Posterior vena cava (tissue), 2 donors: ENCODE measurements at regions of chr1 and their contacts with region 1.

Region 1: DNA sequence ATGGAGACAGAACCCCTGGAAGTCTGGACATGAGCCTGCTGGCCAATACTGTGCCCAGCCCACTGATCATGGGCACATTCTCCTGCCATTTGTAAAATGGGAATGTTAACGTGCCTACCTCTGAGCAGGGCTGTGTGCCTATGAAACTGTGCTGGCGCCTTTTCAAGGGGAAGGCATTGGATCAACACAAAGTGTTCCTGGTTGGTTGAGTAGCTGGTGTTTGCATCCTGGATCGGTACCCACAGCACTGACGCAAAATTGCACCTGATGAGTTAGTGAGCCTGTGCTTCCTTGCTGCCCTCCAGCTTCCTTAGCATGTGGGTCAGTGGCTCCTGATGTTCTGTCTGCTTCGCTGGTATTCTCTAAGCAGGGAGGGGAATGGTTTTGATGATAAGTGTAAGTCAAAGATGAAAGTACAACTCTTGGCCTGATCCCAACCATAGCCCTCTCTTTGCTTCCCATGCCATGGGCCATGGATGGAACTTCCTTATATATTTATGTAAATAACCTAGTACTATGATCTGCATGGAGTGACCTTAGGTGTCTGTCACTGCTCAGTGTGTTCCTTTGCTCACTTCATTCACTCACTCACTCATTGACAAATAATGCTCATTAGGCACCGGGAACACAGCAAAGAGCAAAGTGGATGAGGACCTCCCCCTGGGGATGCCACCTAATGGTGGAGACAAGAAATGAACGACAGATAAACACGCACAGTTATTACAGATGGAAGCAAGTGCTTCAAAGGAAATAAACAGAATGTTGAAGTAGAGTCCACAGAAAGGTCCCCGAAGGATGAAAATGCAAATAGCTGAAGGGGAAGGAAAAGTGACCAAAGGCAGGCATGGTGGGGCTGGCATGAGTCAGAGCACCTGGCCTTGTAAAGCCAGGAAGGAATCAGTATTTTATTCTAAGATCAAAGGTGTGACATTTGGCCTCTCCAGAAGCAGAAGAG is 22.8 kb downstream of the MAB21L3 start:
- DNase-seq: no peak

Region 2: DNA sequence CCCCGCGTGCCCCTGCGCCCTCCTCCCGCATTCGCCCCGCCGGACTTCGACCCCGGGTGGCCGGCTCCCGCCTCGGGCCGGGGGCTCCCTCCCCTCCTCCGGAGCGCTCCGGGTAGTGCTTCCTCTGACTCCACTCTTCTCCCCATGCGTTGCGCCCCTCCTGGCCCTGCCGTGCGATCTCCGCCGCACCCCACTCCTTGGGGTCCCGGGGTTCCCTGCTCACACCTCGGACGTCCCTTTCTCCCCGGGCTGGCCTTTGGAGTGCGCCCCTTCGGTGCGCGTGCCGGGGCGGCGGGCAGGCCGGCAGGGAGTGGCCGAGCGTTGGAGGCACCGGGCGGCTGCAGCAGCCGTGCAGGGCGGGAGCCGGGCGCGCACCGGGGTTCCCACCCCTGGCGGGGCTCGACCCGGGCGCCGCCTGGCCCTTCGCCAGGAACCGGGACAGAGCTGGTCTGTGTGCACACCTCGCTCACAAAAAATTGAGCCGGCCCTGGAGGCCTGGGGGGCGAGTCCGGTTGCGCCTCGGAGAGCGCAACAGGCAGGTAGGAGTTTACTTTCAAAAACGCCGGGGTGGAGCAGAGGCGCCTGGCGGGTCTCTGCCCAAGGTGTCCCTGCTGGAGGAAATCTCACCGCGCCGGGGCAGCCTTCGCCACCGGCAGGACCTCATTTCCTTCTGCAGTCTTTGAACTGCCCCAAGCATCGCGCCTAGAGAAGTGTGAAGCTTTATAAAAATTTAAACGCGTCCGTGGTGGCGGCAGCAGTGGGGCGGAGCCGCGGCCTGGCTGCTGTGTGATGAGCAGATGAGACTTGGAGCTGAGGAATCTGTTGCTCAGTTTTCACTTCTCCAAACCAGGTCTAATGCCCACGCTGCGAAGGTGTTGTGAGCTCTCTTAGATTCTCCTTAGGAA is 491.6 kb before region 1 on chr1:
- intact Hi-C with region 1: loop called in 1 of 2 experiments (anchors 10 kb)
- DNase-seq: no peak

Region 3: GRCh38 chr1:115771847-115772457 is 362.0 kb before region 1 on chr1:
- intact Hi-C with region 1: no loop called
- DNase-seq: peak; percentile 88

Region 4: GRCh38 chr1:116504308-116505156 is 370.6 kb after region 1 on chr1:
- intact Hi-C with region 1: loop called in 1 of 2 experiments (anchors 5 kb)
- DNase-seq: peak; percentile 93